ENCODE measurements at regions of chr1 and their contacts with region 1.

Region 1: DNA sequence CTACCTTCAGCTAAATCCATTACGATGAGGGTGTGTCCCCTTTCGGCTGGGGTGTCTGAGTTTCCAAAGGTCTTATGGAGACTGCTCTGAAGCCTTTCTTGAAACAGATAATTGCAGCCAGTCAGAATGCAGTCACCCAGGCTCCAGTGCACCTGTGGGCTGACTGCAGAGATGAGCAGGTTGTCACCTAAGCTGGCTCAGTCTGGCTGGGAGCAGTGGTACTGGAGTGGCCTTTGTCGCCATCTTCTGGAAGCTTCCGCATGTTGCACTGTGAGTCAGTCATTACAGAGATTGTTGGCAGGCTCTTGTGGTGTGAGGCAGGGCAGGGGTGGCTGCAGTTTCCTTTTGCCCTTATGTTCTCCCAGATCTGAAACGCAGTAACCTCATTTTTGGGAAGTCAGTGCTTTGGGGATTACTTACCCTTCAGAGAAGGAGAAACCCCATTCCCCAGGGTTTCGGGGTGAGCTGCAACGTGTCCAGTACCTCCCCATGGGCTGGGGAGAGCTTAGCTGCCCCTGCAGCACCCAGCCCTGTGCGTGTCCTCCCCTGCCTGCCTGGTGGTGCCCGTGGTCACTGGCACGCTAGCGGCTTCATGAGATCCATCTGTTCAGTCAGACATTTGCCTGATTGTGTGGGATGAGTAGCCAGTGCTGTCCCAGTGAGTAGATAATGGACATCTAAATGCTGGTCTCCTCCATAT is 48.0 kb downstream of the SMYD2 start:
- DNase-seq: peak; percentile 61 to 83
- ATAC-seq: peak; percentile 97

Region 2: GRCh38 chr1:214135886-214136285 is 193.0 kb before region 1 on chr1:
- intact Hi-C with region 1: no loop called
- DNase-seq: no peak
- ATAC-seq: no peak

Region 3: GRCh38 chr1:214215583-214215982 is 113.3 kb before region 1 on chr1:
- intact Hi-C with region 1: loop called in 1 of 2 experiments (anchors 2 kb)
- DNase-seq: no peak
- ATAC-seq: no peak

Region 4: DNA sequence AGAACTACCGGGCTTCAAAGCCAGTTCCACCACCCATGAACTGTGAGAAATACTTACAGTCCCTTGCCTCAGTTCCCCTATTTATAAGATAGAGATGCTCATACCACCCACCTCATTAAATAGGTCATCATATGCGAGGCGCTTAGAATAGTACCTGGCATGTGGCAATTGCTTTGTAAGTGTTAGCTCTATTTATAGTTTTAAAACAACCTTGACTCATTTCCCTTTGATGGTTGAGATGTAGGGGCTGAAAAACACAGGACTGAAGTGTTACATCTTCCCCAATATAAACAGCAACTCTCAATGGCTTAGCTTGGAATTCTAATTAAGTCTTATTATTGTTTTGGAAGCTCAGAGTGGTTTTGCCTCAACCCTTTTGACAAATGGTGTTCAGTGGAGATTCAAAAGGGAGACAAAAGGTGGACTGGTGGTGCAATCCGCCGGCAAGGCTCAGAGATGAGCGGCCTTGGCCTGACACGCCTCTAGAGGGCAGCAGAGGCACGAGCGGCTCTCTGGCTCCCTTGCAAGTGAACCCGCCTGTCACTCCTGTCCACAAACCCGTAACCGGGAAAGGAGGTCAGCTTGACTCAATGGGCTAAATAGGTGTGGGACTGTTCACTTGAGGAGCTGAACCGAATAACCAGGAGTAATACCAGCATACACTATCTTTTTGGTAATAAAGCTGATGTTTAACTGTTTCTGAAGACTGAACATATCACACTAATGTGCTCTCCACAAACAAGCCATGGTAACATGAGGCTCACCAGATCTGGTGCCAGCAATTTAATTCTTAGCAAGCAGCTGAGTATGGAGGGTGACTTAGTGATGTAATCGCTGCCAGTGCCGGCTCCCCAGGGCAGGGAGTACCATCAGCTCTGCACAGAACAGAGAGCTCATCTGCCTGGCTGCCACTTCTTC is 67.5 kb before region 1 on chr1:
- intact Hi-C with region 1: loop called in 1 of 2 experiments (anchors 2 kb)
- DNase-seq: peak; percentile 63 to 87
- ATAC-seq: peak; percentile 95

Region 5: GRCh38 chr1:214271174-214271858 is 57.6 kb before region 1 on chr1:
- intact Hi-C with region 1: loop called in 1 of 2 experiments (anchors 10 kb)
- DNase-seq: no peak
- ATAC-seq: no peak

Region 6: GRCh38 chr1:214391873-214392645 is 63.1 kb after region 1 on chr1:
- intact Hi-C with region 1: no loop called
- DNase-seq: no peak
- ATAC-seq: no peak

Region 7: GRCh38 chr1:214584805-214585766 is 256.2 kb after region 1 on chr1:
- intact Hi-C with region 1: loop called (anchors 5 to 10 kb)
- DNase-seq: no peak
- ATAC-seq: peak; percentile 72

Region 8: GRCh38 chr1:214688891-214689290 is 360.0 kb after region 1 on chr1:
- intact Hi-C with region 1: no loop called
- DNase-seq: no peak
- ATAC-seq: no peak